Sigmoid colon (tissue), 7 donors: ENCODE measurements at regions of chr15 and their contacts with region 1.

Region 1: GRCh38 chr15:41603941-41604911 is 45.2 kb downstream of the TYRO3 start:
- DNase-seq: peak; percentile 81
- H3K4me3 ChIP-seq: peak overlapping the region in 3 of 4 donors; percentile 25 to 28 (median 28)
- H3K27ac ChIP-seq: peak overlapping the region in 3 of 4 donors; percentile 34 to 37 (median 37)
- H3K4me1 ChIP-seq: peaks cover 0 to 12% (median 10%) of the 10 kb centered on the region in 4 donors
- H3K27me3 ChIP-seq: no peaks in the 10 kb centered on the region
- CTCF ChIP-seq: peak; percentile 49 to 79 (median 72)
- EP300 ChIP-seq: no peak
- POLR2A ChIP-seq: no peak

Region 2: DNA sequence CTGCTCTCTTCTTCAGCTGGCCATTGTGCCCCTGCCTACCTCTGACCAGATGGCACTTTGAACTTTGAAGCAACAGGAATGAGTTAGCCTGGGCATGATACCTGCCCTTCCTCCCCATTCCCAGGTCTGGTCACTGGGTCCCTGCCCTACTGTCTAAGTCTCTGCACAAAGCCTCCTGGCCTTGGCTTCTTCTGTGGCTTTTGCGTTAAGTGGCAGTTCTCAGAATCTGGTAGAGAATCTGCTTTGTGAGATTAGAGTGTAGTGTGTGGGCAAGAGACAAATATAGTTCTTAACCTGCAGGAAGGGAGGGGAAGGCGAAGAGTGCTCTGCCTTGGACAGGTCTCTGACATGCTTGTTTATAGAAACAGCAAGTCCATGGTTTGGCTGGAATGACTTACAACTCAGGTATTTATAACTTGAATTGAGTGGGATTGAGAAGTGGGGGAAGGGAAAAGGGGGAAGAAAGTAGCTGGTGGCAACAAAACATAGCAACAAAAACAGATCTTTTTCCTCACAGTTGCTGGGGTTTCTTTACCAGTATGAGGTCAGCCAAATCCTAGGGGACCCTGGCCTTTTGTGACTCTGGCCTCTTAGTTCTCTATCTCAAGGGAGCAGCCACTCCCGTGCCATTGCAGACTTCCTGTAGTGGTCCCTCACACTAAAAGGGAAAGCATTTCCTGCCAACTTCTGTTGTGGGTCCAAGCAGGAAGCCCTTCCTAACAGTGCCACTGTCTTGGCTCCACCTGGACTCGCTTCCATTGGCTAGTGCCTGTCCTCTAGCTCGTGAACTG is 186.7 kb after region 1 on chr15:
- intact Hi-C with region 1: no loop called
- DNase-seq: no peak
- H3K4me3 ChIP-seq: no peak overlapping the region
- H3K27ac ChIP-seq: peak overlapping the region in 3 of 4 donors; percentile 13 to 67 (median 19)
- H3K4me1 ChIP-seq: peaks cover 0 to 45% (median 39%) of the 10 kb centered on the region in 4 donors
- H3K27me3 ChIP-seq: no peaks in the 10 kb centered on the region
- CTCF ChIP-seq: no peak
- EP300 ChIP-seq: no peak
- POLR2A ChIP-seq: no peak

Region 3: DNA sequence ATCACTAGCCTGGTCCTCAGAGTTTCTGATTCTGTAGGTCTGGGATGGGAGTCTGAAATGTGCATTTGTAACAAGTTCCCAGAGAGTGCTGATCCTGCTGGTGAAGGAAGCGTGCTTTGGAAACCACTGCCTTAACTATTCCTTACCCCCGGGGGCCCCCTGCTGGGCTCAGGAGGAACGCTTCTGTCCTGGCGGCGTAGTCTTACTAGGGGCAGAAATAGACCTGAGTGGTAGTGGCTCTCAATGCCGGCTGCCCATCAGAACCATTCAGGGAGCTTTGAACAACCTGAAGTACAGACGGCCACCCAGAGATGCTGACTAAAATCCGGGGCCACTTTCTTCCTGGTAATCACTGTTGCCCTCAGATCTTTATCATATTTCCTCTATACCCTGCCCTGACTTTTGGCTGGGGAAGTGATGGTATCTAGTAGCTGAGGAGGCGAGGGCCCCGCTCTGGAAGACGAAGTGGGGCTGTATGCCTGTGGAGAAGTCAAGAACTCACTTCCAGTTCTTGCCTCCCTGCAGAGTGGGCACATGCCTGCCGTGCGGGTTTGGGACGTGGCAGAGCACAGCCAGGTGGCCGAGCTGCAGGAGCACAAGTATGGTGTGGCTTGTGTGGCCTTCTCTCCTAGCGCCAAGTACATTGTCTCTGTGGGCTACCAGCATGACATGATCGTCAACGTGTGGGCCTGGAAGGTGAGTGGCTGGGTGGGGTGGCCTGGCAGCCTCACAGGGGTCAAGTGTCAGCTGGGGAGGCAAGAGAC is 207.4 kb after region 1 on chr15:
- intact Hi-C with region 1: loop called (anchors 2 kb)
- DNase-seq: peak; percentile 91
- H3K4me3 ChIP-seq: no peak overlapping the region
- H3K27ac ChIP-seq: no peak overlapping the region
- H3K4me1 ChIP-seq: peaks cover 0 to 7% (median 5%) of the 10 kb centered on the region in 4 donors
- H3K27me3 ChIP-seq: no peaks in the 10 kb centered on the region
- CTCF ChIP-seq: peak; percentile 83 to 89 (median 85)
- EP300 ChIP-seq: no peak
- POLR2A ChIP-seq: no peak